Upper lobe of right lung (tissue), 1 donor: ENCODE measurements at regions of chr9 and their contacts with region 1.

Region 1: GRCh38 chr9:8486095-8486494 is 686.5 kb upstream of the DMAC1 start:
- DNase-seq: no peak
- ATAC-seq: no peak
- H3K4me3 ChIP-seq: no peak overlapping the region
- H3K27ac ChIP-seq: no peak overlapping the region
- H3K4me1 ChIP-seq: no peaks in the 10 kb centered on the region
- H3K27me3 ChIP-seq: no peaks in the 10 kb centered on the region
- CTCF ChIP-seq: peak; percentile 27

Region 2: DNA sequence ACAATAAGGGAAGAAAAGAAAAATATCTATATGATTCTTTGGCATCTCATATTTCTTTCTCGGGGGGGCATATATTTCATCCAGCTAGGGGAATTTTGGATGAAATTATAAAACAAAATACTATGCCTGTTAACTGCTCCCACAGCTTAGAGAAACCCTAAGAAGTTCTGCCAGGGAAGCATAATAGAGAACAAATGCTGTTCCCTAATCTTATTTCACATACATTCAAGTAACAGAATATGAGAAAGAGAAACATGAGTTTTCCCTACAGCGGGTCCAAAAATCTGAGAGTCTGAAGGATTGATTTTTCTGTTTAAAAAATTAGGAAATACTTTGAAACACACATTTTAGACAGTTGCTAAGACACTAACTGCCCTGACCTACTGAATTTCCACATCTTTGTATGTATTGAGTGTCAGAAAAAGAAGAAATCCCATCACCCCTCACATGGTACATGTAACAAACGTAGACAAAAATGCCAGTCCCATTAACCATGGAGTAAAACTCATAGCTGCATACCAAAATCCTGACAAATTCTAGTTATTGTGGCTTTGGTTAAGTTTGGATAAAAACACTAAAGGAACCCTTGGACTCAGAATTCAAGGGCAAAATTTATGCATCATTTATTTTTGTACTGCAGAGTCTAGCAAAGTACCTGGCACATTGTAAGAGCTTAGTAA is 66.4 kb before region 1 on chr9:
- intact Hi-C with region 1: loop called (anchors 10 kb)
- DNase-seq: no peak
- ATAC-seq: no peak
- H3K4me3 ChIP-seq: no peak overlapping the region
- H3K27ac ChIP-seq: no peak overlapping the region
- H3K4me1 ChIP-seq: no peaks in the 10 kb centered on the region
- H3K27me3 ChIP-seq: no peaks in the 10 kb centered on the region
- CTCF ChIP-seq: no peak